ENCODE measurements at regions of chr4 and their contacts with region 1.

Region 1: GRCh38 chr4:38675146-38676121 is 11.4 kb downstream of the KLF3 start:
- DNase-seq: peak; percentile 94
- H3K4me3 Mint-ChIP-seq: no peak overlapping the region
- H3K27ac Mint-ChIP-seq: no peak overlapping the region
- H3K4me1 Mint-ChIP-seq: peaks cover 57% of the 10 kb centered on the region
- H3K27me3 Mint-ChIP-seq: peaks cover 9% of the 10 kb centered on the region

Region 2: GRCh38 chr4:38062088-38062893 is 613.1 kb before region 1 on chr4:
- intact Hi-C with region 1: loop called (anchors 1 kb)
- DNase-seq: peak; percentile 88
- H3K4me3 Mint-ChIP-seq: peak overlapping the region; percentile 88
- H3K27ac Mint-ChIP-seq: peak overlapping the region; percentile 69
- H3K4me1 Mint-ChIP-seq: peaks cover 12% of the 10 kb centered on the region
- H3K27me3 Mint-ChIP-seq: no peaks in the 10 kb centered on the region

Region 3: DNA sequence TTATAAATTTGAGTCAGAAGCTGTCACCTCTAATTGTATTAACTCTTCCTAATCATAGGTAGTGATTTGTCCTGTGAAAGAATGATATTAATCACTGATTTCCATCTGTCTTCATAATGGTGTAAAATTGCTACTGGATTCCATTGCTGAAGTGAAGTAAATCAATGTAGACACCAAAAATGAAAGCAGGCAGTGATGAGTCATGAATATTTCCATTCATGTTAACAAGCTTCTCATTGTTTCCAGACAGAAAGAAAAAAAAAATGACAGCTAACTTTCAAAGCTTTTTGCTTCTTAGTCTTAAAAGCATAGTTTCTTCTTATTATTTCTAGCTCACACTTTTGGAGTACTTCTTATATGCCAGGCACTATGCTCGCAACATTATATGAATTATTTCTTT is 213.7 kb after region 1 on chr4:
- intact Hi-C with region 1: no loop called
- DNase-seq: peak; percentile 68
- H3K4me3 Mint-ChIP-seq: peak overlapping the region; percentile 63
- H3K27ac Mint-ChIP-seq: peak overlapping the region; percentile 95
- H3K4me1 Mint-ChIP-seq: peaks cover 34% of the 10 kb centered on the region
- H3K27me3 Mint-ChIP-seq: no peaks in the 10 kb centered on the region